ENCODE measurements at regions of chr5 and their contacts with region 1.

Region 1: DNA sequence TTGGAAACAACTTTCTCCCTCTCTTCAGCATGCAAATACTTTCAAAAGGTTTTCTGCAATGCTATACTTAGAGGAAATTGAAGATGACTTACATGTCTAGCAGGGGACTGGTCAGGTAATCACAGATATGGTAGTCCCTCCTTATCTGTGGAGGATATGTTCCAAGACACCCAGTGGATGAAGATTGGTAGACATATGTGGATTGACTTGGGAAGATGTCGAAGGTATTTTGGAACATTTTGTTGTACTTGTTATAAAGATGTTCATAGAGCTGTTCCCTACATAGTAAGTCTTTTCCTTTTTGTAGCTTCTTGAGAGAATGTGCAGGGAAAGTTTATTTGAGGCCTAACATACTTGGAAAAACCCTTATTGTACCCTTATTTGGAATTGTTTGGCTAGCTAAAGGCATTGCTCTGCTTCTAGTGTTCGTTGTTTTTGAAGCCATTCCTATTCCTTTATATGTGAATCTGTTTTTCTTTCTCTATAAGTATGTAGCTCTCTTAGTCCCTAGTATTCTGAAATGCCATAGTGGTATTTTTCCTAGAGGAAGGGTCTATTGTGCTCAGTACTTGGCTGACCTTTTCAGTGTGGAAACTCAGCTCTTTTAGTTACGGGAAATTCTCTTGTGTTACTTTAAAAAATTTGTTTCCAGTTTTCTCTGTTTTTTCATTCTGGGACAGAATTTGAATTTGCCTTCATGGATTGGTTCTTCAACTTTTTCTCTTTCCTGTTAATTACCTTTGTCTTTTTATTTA is 25.7 kb downstream of the GPR151 start:
- DNase-seq: no peak
- ATAC-seq: no peak
- H3K4me3 Mint-ChIP-seq: no peak overlapping the region
- H3K27ac Mint-ChIP-seq: no peak overlapping the region
- H3K4me1 Mint-ChIP-seq: no peaks in the 10 kb centered on the region
- H3K27me3 Mint-ChIP-seq: no peaks in the 10 kb centered on the region
- CTCF ChIP-seq: no peak

Region 2: DNA sequence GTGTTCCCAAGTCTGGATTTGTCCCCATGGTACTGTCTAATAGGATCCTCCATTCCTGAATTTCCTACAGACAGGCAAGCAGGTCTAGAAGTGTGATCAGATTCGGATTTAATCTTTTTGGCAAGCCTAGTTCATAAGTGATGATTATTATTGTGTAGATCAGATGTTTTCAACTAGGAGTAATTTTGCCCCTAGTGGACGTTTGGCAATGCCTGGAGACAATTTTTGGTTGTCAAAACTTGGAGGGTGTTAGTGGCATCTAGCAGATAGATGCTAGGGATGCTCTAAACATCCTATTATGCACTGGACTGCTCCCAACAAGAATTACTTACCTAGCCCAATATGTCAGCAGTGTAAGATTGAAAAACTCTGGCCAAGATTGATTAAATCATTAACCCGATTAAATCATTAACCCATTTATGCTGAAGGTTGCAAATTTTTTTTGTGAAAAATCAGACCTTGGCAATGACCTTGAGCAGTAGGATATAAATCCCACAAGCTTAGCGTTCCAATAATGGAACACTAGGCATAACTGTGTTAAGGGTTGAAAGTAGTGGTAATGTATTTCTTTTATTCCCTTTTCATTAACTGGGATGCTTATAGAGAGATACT is 15.0 kb before region 1 on chr5:
- CTCF ChIA-PET with region 1: interaction called, 3 read pairs
- POLR2A ChIA-PET with region 1: no interaction called
- intact Hi-C with region 1: loop called (anchors 2 kb)
- DNase-seq: no peak
- ATAC-seq: no peak
- H3K4me3 Mint-ChIP-seq: no peak overlapping the region
- H3K27ac Mint-ChIP-seq: no peak overlapping the region
- H3K4me1 Mint-ChIP-seq: peaks cover 10% of the 10 kb centered on the region
- H3K27me3 Mint-ChIP-seq: no peaks in the 10 kb centered on the region
- CTCF ChIP-seq: no peak

Measured in activated B cell treated with CpG ODN at 0.5 μM for 24 hours (primary cell).